ENCODE measurements at regions of chr10 and their contacts with region 1.

Region 1: DNA sequence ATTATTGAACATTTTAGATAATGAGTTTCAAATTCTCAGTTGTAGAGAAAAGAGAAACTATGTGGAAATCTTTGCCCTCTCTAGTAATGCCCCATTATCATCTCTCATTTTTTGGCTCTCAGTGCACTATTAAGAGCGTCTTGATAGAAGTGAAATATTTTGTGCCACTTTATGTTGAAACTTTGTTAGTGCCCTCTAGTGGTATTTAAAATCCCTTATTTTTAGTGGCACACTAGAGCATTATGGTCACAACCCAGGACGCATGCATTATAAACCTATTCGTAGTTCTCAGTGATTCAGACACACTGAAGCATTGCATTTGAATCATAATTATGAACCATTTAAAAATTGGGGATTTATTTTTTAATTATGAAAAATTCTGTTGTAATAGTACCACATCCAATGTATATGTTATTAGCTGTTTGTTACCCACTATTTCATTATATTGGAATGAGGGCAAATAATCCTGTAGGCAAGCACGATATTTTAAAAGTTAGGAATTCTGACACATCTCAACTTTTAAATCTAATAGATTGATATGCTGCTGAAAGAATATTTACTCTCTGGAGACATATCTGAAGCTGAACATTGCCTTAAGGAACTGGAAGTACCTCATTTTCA is 21.9 kb downstream of the PDCD4 start:
- DNase-seq: peak in 1 of 35 experiments; percentile 72
- ATAC-seq: peak; percentile 56 to 87 (median 82)
- H3K4me3 ChIP-seq: no peak overlapping the region
- H3K4me3 Mint-ChIP-seq: no peak overlapping the region
- H3K27ac ChIP-seq: no peak overlapping the region
- H3K27ac Mint-ChIP-seq: no peak overlapping the region
- H3K4me1 ChIP-seq: peaks cover 3 to 15% of the 10 kb centered on the region in 2 experiments
- H3K4me1 Mint-ChIP-seq: peaks cover 62 to 65% (median 65%) of the 10 kb centered on the region in 3 donors
- H3K27me3 ChIP-seq: no peaks in the 10 kb centered on the region
- H3K27me3 Mint-ChIP-seq: no peaks in the 10 kb centered on the region

Region 2: GRCh38 chr10:110746254-110746826 is 147.3 kb before region 1 on chr10:
- CTCF ChIA-PET with region 1: interaction called, 7 to 34 read pairs
- POLR2A ChIA-PET with region 1: interaction called in 1 of 2 experiments, 3 read pairs
- DNase-seq: peak in 27 of 35 experiments; percentile 15 to 74 (median 38)
- ATAC-seq: peak in 1 of 4 experiments; percentile 42
- H3K4me3 ChIP-seq: no peak overlapping the region
- H3K4me3 Mint-ChIP-seq: peak overlapping the region in 1 of 3 donors; percentile 2
- H3K27ac ChIP-seq: no peak overlapping the region
- H3K27ac Mint-ChIP-seq: peak overlapping the region in 1 of 2 donors; percentile 34
- H3K4me1 ChIP-seq: peaks cover 42 to 49% of the 10 kb centered on the region in 2 experiments
- H3K4me1 Mint-ChIP-seq: peaks cover 67 to 86% (median 70%) of the 10 kb centered on the region in 3 donors
- H3K27me3 ChIP-seq: no peaks in the 10 kb centered on the region
- H3K27me3 Mint-ChIP-seq: no peaks in the 10 kb centered on the region

Region 3: GRCh38 chr10:110918643-110919363 is 25.1 kb after region 1 on chr10 and contains the start of gene BBIP1:
- CTCF ChIA-PET with region 1: interaction called in 1 of 2 experiments, 20 read pairs
- POLR2A ChIA-PET with region 1: interaction called, 3 to 29 read pairs
- DNase-seq: peak in 14 of 35 experiments; percentile 11 to 99 (median 97)
- ATAC-seq: peak; percentile 40 to 94 (median 93)
- H3K4me3 ChIP-seq: peak within 1 kb of the TSS; percentile 81
- H3K4me3 Mint-ChIP-seq: peak within 1 kb of the TSS; percentile 98 to 99 (median 99)
- H3K27ac ChIP-seq: peak within 1 kb of the TSS; percentile 97
- H3K27ac Mint-ChIP-seq: peak within 1 kb of the TSS; percentile 99 to 100
- H3K4me1 ChIP-seq: peaks cover 6 to 21% of the 10 kb centered on the region in 2 experiments
- H3K4me1 Mint-ChIP-seq: peaks cover 47 to 61% (median 59%) of the 10 kb centered on the region in 3 donors
- H3K27me3 ChIP-seq: no peaks in the 10 kb centered on the region
- H3K27me3 Mint-ChIP-seq: no peaks in the 10 kb centered on the region
- total RNA-seq, gene BBIP1: 28.6 to 36.6 (median 32.0) TPM